OCI-LY7 (cell line): ENCODE measurements at regions of chr15 and their contacts with region 1.

Region 1: GRCh38 chr15:73964736-73965093 is 27.4 kb downstream of the STOML1 start:
- DNase-seq: peak; percentile 83
- H3K4me3 ChIP-seq: peak overlapping the region; percentile 50
- H3K27ac ChIP-seq: peak overlapping the region; percentile 16
- H3K4me1 ChIP-seq: peaks cover 24% of the 10 kb centered on the region
- CTCF ChIP-seq: peak; percentile 95

Region 2: GRCh38 chr15:73927476-73928240 is 37.1 kb before region 1 on chr15:
- CTCF ChIA-PET with region 1: no interaction called
- POLR2A ChIA-PET with region 1: no interaction called
- intact Hi-C with region 1: no loop called
- DNase-seq: no peak
- H3K4me3 ChIP-seq: no peak overlapping the region
- H3K27ac ChIP-seq: no peak overlapping the region
- H3K4me1 ChIP-seq: no peaks in the 10 kb centered on the region
- CTCF ChIP-seq: peak; percentile 39; the same call in 1 of the 2 replicates

Region 3: DNA sequence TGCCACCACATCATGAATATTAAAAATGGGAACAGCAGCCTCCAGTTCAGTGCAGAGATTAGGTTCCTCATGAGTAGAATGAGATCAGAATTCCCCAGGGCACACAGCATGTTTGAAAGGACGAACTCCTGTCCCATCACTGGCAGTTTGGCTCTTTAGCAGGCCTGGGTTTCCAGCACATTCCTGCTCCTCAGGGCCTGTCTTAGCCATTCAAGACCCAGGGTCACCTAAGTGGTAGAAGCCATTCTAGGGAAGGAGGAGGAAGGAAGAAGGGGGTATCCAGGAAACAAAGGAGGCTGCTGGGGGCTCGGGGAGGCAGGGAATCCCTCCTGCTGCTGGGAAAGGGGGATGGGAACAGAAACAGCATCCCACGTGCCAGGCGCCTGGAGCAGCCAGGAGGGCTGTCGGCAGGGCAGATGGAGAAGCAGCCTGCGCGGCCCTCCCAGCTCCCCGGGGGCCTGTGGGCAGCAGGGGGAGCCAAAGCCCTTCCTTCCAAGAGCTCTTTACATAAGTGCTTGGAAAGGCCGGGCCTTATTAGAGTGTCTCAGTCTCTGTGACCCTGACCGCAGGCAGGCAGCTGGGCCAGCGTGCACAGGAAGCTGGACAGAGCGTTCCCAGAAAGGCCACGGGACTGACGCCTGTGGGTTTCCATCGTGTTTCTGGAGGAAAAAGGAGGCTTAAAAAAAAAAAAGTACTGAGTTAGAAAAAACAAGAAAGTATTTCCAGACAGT is 13.7 kb before region 1 on chr15:
- CTCF ChIA-PET with region 1: no interaction called
- POLR2A ChIA-PET with region 1: no interaction called
- intact Hi-C with region 1: loop called (anchors 1 kb)
- DNase-seq: peak; percentile 71
- H3K4me3 ChIP-seq: no peak overlapping the region
- H3K27ac ChIP-seq: no peak overlapping the region
- H3K4me1 ChIP-seq: no peaks in the 10 kb centered on the region
- CTCF ChIP-seq: peak; percentile 73

Region 4: DNA sequence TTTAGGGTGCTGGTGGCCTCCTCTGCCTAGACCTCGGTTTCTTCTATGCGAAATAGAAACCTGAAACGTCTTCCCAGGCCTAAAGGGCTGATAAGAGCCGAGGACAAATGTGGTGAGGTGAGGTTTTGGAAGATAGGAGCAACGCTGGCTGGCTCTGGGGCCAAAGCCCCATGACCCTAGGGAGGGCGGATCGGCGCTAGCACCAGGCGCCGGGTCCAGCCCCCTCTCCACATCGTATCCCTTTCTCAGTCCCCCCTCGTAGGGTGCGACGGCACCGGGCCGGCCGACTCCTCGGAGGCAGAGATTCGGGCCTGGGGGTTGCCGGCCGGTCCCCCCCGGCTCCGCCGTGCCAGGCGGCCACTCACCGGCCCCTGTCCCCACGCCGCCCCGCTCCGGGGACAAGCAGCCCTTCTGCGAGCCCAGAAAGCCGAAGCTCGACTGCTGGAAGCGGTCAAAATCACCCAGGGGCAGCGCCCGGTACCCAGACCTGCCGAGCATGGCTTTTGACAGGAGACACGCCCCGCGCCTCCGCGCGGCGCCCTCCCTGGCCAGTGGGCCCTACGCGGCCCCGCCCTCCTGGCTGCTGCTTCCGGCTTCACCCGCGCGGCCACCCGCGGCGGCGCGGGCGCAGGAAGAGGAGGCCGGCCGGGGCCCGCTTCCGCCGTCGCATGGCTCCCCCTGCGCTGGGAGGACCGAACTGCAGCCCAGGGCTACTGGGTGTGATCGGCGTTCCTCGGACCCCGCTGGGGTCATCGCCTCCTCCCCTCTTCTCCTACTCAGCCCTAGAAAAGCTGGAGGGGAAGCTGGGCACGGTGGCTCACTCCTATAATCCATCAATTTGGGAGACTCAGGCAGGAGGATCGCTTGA is 27.2 kb after region 1 on chr15 and contains the start of gene STOML1:
- CTCF ChIA-PET with region 1: no interaction called
- POLR2A ChIA-PET with region 1: no interaction called
- intact Hi-C with region 1: no loop called
- DNase-seq: peak; percentile 95
- H3K4me3 ChIP-seq: peak within 1 kb of the TSS; percentile 97
- H3K27ac ChIP-seq: no peak within 1 kb of the TSS
- H3K4me1 ChIP-seq: peaks cover 38% of the 10 kb centered on the region
- CTCF ChIP-seq: peak; percentile 85
- total RNA-seq, gene STOML1: 5.7 and 8.0 TPM in 2 replicates

Region 5: GRCh38 chr15:74011610-74012009 is 46.9 kb after region 1 on chr15:
- CTCF ChIA-PET with region 1: no interaction called
- POLR2A ChIA-PET with region 1: no interaction called
- intact Hi-C with region 1: no loop called
- DNase-seq: no peak
- H3K4me3 ChIP-seq: no peak overlapping the region
- H3K27ac ChIP-seq: no peak overlapping the region
- H3K4me1 ChIP-seq: peaks cover 17% of the 10 kb centered on the region
- CTCF ChIP-seq: no peak

Region 6: DNA sequence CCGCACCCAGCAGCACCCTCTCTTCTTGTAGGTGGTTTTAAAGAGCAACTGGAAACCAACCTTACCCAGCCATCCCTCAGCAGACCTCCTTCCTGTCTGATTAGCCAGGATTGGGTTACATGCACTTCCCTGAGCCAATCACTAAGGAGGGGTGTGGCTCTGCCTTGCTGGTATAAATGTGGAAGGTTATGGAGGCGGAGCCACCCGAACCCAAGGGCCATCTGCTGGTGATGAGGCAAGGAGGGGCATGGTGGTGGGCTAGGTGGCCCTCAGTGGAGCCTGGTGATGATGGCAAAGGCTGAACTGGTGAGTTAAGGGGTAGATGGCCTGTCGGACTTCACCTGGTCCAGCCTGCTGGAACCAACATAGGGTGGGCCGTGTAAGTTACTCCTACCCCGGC is 311.2 kb after region 1 on chr15:
- CTCF ChIA-PET with region 1: no interaction called
- POLR2A ChIA-PET with region 1: no interaction called
- intact Hi-C with region 1: no loop called
- DNase-seq: peak; percentile 19
- H3K4me3 ChIP-seq: no peak overlapping the region
- H3K27ac ChIP-seq: no peak overlapping the region
- H3K4me1 ChIP-seq: no peaks in the 10 kb centered on the region
- CTCF ChIP-seq: no peak